Upper lobe of right lung (tissue), 1 donor: ENCODE measurements at regions of chr3 and their contacts with region 1.

Region 1: GRCh38 chr3:37967260-37967881 is 23.2 kb upstream of the VILL start:
- DNase-seq: peak; percentile 79
- ATAC-seq: peak; percentile 91
- H3K4me3 ChIP-seq: no peak overlapping the region
- H3K27ac ChIP-seq: no peak overlapping the region
- H3K4me1 ChIP-seq: peaks cover 33% of the 10 kb centered on the region
- H3K27me3 ChIP-seq: no peaks in the 10 kb centered on the region
- CTCF ChIP-seq: peak; percentile 80

Region 2: GRCh38 chr3:37338500-37338899 is 628.9 kb before region 1 on chr3:
- intact Hi-C with region 1: no loop called
- DNase-seq: no peak
- ATAC-seq: peak; percentile 89
- H3K4me3 ChIP-seq: no peak overlapping the region
- H3K27ac ChIP-seq: no peak overlapping the region
- H3K4me1 ChIP-seq: no peaks in the 10 kb centered on the region
- H3K27me3 ChIP-seq: no peaks in the 10 kb centered on the region
- CTCF ChIP-seq: no peak

Region 3: DNA sequence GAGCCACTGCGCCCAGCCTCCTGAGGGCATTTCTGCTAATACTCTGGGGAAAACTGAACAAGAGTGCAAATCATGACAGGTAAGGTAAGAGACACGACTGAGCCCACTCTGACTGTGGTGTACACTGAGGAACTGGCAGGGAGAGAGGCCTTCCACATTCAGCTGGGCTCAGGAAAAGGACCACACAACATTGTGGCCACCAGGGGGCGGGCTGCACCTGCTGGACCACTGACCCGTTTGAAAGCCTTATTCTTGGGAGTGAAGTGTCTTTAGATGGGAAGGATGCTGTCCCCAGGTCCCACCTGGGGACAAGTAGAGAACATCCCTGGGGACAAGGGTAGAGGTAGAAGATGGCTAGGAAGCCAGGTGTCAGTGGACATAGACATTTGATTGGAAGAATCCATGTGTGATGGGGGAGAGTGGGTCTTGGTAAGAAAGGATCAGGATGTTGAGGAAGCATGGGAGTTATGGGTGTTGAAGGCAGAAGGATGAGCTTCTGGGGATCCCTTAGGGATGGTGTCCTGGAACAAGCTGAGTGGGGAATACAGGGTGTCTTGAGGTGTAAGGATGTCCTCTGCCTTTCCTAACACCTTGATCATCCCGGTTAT is 111.9 kb before region 1 on chr3:
- intact Hi-C with region 1: loop called (anchors 5 kb)
- DNase-seq: peak; percentile 90
- ATAC-seq: peak; percentile 78
- H3K4me3 ChIP-seq: no peak overlapping the region
- H3K27ac ChIP-seq: no peak overlapping the region
- H3K4me1 ChIP-seq: peaks cover 6% of the 10 kb centered on the region
- H3K27me3 ChIP-seq: no peaks in the 10 kb centered on the region
- CTCF ChIP-seq: peak; percentile 95